ENCODE measurements at regions of chr10 and their contacts with region 1.

Region 1: GRCh38 chr10:93816123-93816747 is 58.5 kb downstream of the LGI1 start:
- DNase-seq: peak; percentile 21 to 62
- H3K4me3 ChIP-seq: no peak overlapping the region
- H3K27ac ChIP-seq: no peak overlapping the region
- H3K4me1 ChIP-seq: peaks cover 0 to 2% (median under 1%) of the 10 kb centered on the region in 4 experiments; a peak in 2 of 7 replicates
- H3K27me3 ChIP-seq: no peaks in the 10 kb centered on the region
- CTCF ChIP-seq: peak; percentile 77 to 86 (median 82)
- EP300 ChIP-seq: no peak
- POLR2A ChIP-seq: no peak
- RAD21 ChIP-seq: peak; percentile 78 to 85

Region 2: DNA sequence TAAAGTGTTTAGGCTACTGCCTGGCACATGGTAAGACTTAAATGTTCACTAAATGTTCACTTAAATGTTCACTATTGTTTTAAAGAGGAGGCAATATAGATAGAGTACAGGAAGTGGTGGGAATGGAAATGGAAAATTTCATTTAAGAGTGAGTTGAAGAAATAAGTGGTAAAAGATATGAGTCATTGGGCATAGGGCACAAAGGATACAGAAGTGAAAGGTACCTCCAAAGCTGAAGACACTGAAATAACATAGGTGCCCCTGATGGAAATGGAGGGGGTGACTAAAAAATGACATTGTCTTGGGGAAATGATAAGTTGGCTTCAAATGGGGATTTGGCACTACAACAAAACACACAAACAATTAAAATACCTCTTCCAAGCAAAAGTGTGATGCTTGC is 108.6 kb before region 1 on chr10:
- CTCF ChIA-PET with region 1: interaction called, 11 read pairs
- POLR2A ChIA-PET with region 1: no interaction called
- DNase-seq: no peak
- H3K4me3 ChIP-seq: no peak overlapping the region
- H3K27ac ChIP-seq: no peak overlapping the region
- H3K4me1 ChIP-seq: no peaks in the 10 kb centered on the region
- H3K27me3 ChIP-seq: no peaks in the 10 kb centered on the region
- CTCF ChIP-seq: no peak
- EP300 ChIP-seq: no peak
- POLR2A ChIP-seq: no peak
- RAD21 ChIP-seq: no peak

Region 3: DNA sequence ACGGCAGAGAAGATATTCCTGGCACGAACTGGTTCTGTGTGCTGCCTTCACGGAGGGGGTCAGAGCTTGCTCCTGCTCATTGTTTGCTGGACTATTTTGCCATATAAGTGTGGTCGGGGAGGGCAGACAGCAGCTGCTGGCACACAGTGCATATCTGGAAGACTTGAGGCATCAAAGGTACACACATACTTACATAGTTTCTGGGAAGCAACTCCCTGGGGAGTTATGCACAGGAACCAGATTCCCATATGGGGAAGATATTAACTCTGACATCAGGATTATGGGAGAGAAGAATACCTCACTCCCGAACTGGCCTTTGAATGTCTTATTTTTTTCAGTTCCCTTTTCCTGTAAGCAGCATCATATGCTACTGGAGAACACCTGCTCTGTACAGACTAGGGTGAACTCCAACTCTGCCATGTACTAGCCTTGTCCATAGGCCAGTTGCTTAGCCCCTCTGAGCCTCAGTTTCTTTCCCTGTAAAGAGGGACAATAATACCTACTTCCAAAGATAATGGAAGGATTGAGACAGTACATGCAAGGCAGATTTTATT is 17.0 kb before region 1 on chr10:
- CTCF ChIA-PET with region 1: interaction called, 29 read pairs
- POLR2A ChIA-PET with region 1: no interaction called
- DNase-seq: no peak
- H3K4me3 ChIP-seq: no peak overlapping the region
- H3K27ac ChIP-seq: no peak overlapping the region
- H3K4me1 ChIP-seq: peaks cover 0 to 2% (median 0%) of the 10 kb centered on the region in 4 experiments; a peak in 3 of 7 replicates
- H3K27me3 ChIP-seq: 0 out of 7 replicates have a peak, but pooled peaks cover 0 to 2% (median 0%) of the 10 kb centered on the region in 4 experiments
- CTCF ChIP-seq: no peak
- EP300 ChIP-seq: no peak
- POLR2A ChIP-seq: no peak
- RAD21 ChIP-seq: no peak

Region 4: GRCh38 chr10:93838278-93838677 is 22.0 kb after region 1 on chr10:
- CTCF ChIA-PET with region 1: interaction called, 10 read pairs
- POLR2A ChIA-PET with region 1: no interaction called
- DNase-seq: no peak
- H3K4me3 ChIP-seq: no peak overlapping the region
- H3K27ac ChIP-seq: no peak overlapping the region
- H3K4me1 ChIP-seq: peaks cover 2 to 6% (median 4%) of the 10 kb centered on the region in 4 experiments; a peak in 5 of 7 replicates
- H3K27me3 ChIP-seq: peaks cover 34 to 75% (median 69%) of the 10 kb centered on the region in 4 experiments
- CTCF ChIP-seq: no peak
- EP300 ChIP-seq: no peak
- POLR2A ChIP-seq: no peak
- RAD21 ChIP-seq: no peak

Region 5: DNA sequence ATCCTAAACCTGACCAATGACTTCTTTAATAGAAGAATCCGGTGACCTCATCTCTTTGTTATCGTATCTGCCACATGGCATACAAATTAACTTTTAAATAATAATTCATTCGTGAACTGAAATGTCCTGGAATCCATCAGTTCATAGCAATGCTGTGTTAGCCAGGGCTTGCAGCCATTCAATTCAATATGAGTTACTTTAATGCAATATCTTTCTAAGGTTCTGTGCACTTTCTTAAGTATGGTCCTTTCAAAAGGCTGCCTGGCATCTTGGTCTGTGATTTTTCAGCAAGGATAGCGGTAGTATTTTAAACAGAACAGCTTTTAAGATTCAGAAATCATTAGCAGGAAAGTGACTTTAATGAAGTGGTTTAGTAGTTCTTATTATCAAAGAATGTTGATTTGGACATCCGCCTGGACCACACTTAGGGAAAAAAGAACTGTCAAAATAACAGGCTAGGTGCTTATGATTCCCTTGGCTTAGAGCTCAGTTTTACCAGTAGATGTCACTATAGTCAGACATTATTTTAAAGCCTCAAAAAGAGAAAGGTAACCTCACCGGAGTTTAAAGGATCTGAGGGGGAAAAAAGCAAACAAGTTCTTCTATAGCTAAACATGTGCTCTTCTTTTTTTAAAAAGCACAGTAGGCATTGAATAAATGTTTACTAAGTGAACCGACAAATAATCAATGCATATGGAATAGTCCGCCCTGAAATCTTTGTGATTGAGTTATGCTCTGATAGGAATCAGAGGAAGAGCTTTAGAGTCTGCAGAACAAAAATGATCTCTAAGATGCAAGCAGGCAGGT is 100.2 kb after region 1 on chr10:
- CTCF ChIA-PET with region 1: interaction called, 25 read pairs
- POLR2A ChIA-PET with region 1: no interaction called
- DNase-seq: no peak
- H3K4me3 ChIP-seq: peak overlapping the region in 1 of 4 experiments; percentile 3; a peak in 2 of 8 replicates
- H3K27ac ChIP-seq: no peak overlapping the region
- H3K4me1 ChIP-seq: peaks cover 0 to 2% (median 0%) of the 10 kb centered on the region in 4 experiments; a peak in 1 of 7 replicates
- H3K27me3 ChIP-seq: no peaks in the 10 kb centered on the region
- CTCF ChIP-seq: peak in 2 of 3 experiments; percentile 34 to 58; a peak in 2 of 4 replicates
- EP300 ChIP-seq: no peak
- POLR2A ChIP-seq: no peak
- RAD21 ChIP-seq: peak; percentile 56 to 62

Measured in H1 (cell line).